Activated naive CD8-positive, alpha-beta T cell treated with anti-CD3 and anti-CD28 coated beads, Interleukin-2, amount 10 ng/mL, durations not matched to agents 7 days and 5 days (primary cell): ENCODE measurements at regions of chr11 and their contacts with region 1.

Region 1: GRCh38 chr11:447923-448731 is 2.0 kb upstream of the PTDSS2 start:
- DNase-seq: peak; percentile 99
- ATAC-seq: peak; percentile 81
- H3K4me3 Mint-ChIP-seq: peak overlapping the region; percentile 94
- H3K27ac Mint-ChIP-seq: peak overlapping the region; percentile 97
- H3K4me1 Mint-ChIP-seq: peaks cover 15% of the 10 kb centered on the region
- H3K27me3 Mint-ChIP-seq: peaks cover 3% of the 10 kb centered on the region

Region 2: DNA sequence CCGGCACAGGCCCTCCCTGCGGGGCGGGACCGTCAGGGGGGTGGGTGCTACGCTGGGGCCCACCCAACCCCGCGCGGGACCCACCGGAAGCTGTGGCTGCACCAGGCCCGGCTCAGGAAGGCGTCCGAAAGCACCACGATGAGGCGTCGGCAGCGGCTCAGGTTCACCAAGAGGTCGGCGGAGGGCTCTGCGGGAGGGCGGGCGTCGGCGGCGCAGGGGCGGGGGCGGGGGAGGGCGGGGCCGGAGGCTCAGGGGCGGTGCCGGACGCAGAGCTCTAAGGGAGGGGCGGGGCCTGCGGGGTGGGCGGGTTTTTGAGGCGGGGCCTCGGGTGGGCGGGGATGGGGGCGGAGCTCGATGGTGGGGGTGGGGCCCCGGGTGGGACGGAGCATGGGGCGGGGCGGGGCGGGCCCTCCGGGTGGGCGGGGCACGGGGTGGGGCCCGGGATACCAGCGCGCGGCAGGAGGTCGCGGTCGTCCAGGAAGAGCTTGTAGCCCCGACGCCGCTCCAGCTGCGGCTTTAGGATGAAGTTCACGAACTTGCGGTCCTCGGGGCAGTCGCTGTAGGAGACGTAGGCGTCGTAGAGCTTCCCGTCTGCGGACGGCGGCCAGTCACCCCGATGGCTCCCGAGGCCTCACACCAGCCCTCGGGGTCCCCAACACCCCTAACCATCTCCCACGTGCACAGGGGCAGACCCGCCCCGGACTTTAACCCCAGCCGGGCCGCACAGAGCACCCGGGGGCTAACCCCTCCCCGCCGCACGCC is 41.0 kb before region 1 on chr11:
- POLR2A ChIA-PET with region 1: interaction called, 51 read pairs
- DNase-seq: peak; percentile 95
- ATAC-seq: peak; percentile 93
- H3K4me3 Mint-ChIP-seq: peak overlapping the region; percentile 25
- H3K27ac Mint-ChIP-seq: peak overlapping the region; percentile 61
- H3K4me1 Mint-ChIP-seq: peaks cover 5% of the 10 kb centered on the region
- H3K27me3 Mint-ChIP-seq: no peaks in the 10 kb centered on the region

Region 3: GRCh38 chr11:416757-417621 is 31.1 kb before region 1 on chr11:
- POLR2A ChIA-PET with region 1: interaction called, 118 read pairs
- DNase-seq: peak; percentile 82
- ATAC-seq: peak; percentile 46
- H3K4me3 Mint-ChIP-seq: peak overlapping the region; percentile 97
- H3K27ac Mint-ChIP-seq: peak overlapping the region; percentile 86
- H3K4me1 Mint-ChIP-seq: peaks cover 15% of the 10 kb centered on the region
- H3K27me3 Mint-ChIP-seq: no peaks in the 10 kb centered on the region

Region 4: GRCh38 chr11:464316-464715 is 16.2 kb after region 1 on chr11:
- POLR2A ChIA-PET with region 1: no interaction called
- DNase-seq: no peak
- ATAC-seq: no peak
- H3K4me3 Mint-ChIP-seq: no peak overlapping the region
- H3K27ac Mint-ChIP-seq: no peak overlapping the region
- H3K4me1 Mint-ChIP-seq: no peaks in the 10 kb centered on the region
- H3K27me3 Mint-ChIP-seq: no peaks in the 10 kb centered on the region

Region 5: GRCh38 chr11:477052-477715 is 29.1 kb after region 1 on chr11:
- POLR2A ChIA-PET with region 1: no interaction called
- DNase-seq: no peak
- ATAC-seq: no peak
- H3K4me3 Mint-ChIP-seq: no peak overlapping the region
- H3K27ac Mint-ChIP-seq: no peak overlapping the region
- H3K4me1 Mint-ChIP-seq: no peaks in the 10 kb centered on the region
- H3K27me3 Mint-ChIP-seq: no peaks in the 10 kb centered on the region

Region 6: DNA sequence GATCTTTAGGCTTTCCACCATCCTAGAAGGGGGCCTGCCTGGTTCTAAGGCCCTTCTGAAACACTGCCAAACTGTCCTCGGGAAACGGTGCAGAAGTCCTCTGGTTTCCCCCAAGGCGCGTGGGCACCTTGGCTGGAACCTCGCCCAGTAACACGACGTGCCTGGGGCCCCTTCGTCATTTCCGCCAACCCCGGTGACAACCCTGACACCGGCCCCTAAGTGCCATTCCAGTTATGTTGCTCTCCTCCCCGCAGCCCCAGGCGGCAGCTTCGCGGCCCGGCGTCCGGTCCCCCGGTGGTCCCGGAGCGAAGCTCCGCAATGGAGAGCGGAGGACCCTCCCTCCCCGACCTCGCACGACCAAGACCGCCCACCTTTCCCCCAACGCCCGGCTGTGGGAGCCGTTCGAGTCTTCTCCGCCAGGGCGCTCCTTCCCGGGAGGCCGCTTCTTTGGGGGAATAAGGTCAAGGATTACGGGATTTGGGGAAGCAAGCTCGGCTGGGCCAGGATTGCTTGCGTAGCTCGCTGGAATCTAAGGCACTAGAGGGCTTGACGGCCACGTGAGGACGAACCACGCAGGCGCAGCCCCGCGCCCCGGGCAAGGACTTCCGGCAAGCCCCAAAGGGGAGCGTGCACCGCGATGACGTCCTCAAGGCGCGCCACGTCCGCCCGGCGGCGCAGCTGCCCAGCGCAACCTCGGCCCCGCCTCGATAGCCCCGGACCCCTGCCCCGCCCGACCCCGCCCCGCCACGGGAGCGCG is 58.3 kb after region 1 on chr11:
- POLR2A ChIA-PET with region 1: interaction called, 13 read pairs
- DNase-seq: peak; percentile 98
- ATAC-seq: peak; percentile 83
- H3K4me3 Mint-ChIP-seq: peak overlapping the region; percentile 90
- H3K27ac Mint-ChIP-seq: peak overlapping the region; percentile 99
- H3K4me1 Mint-ChIP-seq: peaks cover 18% of the 10 kb centered on the region
- H3K27me3 Mint-ChIP-seq: no peaks in the 10 kb centered on the region